PC-3 (cell line): ENCODE measurements at regions of chr12 and their contacts with region 1.

Region 1: DNA sequence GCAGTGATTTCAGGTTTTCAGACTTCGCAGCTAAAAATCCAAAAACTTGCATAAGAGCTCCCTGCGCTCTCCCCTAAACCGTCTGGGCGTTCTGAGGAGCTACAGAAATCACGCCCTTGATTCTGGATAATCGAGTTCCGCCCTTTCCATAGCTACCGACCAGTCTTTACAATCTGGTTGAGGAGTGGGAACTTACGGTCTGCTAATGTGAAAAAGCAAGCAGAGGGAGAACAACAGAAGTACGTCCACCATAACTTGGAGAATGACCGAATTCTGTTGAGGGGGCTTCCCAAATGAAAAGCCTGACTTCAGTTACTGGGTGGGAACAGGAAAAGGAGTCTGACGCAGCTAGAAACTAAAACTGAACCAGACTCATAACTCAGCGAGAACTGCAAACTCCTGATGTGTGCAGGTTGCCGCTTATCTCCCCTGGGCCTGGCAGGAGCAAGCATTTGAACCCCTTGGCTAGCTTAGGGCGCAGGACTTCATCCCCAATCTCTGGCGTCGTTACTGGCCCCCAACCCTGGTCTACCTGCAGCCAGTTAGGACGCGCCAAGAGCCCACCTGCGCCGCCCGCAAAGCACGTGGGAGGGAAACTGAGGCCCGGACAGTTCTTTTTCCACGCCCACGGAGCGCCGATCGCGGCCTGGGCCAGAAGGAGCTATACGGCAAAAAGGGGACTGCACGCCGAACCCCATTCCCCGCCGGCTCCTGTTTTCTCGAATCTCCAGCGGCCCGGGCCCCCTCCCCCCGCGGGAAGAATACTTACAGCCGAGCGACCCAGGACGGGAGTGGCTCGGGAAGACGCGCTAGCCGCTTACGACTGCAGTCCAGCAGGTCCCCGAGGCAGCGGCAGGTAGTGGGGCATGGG is 838 bp downstream of the LRIG3 start:
- DNase-seq: peak; percentile 48
- ATAC-seq: peak; percentile 37
- H3K4me3 ChIP-seq: peak overlapping the region; percentile 97
- H3K27ac ChIP-seq: peak overlapping the region; percentile 69
- H3K4me1 ChIP-seq: peaks cover 44% of the 10 kb centered on the region
- H3K27me3 ChIP-seq: no peaks in the 10 kb centered on the region
- CTCF ChIP-seq: no peak

Region 2: DNA sequence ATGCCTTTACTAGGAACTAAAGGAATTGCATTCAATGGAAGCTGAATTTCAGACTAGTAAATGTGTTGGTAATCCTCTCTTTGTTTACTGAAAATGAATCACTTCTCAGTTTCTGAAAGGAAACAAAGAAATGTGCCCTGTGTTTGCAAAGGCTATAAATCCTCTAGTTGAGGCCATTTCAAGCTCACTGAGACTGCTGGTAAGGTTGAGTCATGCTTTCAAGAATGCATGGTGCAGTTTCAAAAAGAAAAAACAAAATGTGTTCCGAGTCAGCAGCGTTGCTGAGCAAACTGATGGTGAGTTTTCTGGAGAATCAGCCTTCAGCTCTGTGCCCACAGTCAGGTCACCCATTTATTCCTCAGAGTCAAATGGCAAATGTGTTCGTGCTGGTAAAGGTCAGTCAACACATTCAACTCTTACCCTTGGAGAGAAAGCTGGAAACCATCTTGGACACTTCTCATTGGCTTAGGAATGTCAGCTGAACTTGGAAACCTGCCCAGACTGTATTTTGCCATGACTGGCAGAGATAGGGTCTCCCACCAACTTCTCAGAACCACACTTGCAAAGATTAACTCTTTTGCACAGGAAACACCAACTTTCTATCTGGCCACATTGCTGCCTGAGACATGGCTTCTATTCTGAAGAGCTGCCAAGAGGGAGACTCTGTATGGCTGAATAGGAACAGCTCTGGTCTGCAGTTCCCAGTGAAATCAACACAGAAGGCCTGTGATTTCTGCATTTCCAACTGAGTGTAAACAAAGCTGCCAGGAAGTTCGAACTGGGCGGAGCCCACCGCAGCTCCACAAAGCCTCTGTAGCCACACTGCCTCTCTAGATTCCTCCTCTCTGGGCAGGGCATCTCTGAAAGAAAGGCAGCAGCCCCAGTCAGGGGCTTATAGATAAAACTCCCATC is 493.7 kb before region 1 on chr12:
- CTCF ChIA-PET with region 1: no interaction called
- POLR2A ChIA-PET with region 1: no interaction called
- intact Hi-C with region 1: loop called (anchors 5 kb)
- DNase-seq: peak; percentile 95
- ATAC-seq: peak; percentile 87
- H3K4me3 ChIP-seq: peak overlapping the region; percentile 51
- H3K27ac ChIP-seq: peak overlapping the region; percentile 99
- H3K4me1 ChIP-seq: peaks cover 42% of the 10 kb centered on the region
- H3K27me3 ChIP-seq: no peaks in the 10 kb centered on the region
- CTCF ChIP-seq: no peak

Region 3: GRCh38 chr12:58540480-58541299 is 378.8 kb before region 1 on chr12:
- CTCF ChIA-PET with region 1: no interaction called
- POLR2A ChIA-PET with region 1: no interaction called
- intact Hi-C with region 1: loop called (anchors 10 kb)
- DNase-seq: peak; percentile 92
- ATAC-seq: peak; percentile 98
- H3K4me3 ChIP-seq: no peak overlapping the region
- H3K27ac ChIP-seq: peak overlapping the region; percentile 3; the same call in 1 of the 2 replicates
- H3K4me1 ChIP-seq: peaks cover 33% of the 10 kb centered on the region
- H3K27me3 ChIP-seq: no peaks in the 10 kb centered on the region
- CTCF ChIP-seq: peak; percentile 94

Region 4: DNA sequence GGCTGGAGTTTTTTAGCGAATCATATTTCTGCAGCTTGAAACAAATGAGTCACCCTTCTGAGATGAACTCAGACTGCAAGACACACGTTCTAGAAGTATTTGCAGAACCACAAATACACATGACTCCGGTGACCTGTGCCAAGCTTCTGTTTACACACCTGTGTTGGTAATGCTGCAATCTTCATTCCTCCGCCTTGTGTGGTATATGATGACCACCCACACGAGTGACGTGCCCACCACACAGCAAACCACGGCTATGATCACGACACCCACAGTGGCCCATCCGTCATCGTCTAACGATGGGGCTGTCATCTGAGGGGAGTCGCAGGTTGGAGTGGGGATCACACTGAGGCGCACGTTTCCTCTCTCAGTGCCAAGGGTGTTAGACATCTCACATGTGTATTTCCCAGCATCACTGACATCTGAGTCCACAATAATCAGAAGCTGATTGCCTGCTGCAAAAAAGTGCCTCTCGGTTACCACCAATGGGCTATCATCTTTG is 42.2 kb before region 1 on chr12:
- CTCF ChIA-PET with region 1: no interaction called
- POLR2A ChIA-PET with region 1: interaction called, 4 read pairs
- intact Hi-C with region 1: loop called (anchors 2 kb)
- DNase-seq: peak; percentile 99
- ATAC-seq: peak; percentile 99
- H3K4me3 ChIP-seq: no peak overlapping the region
- H3K27ac ChIP-seq: peak overlapping the region; percentile 32
- H3K4me1 ChIP-seq: peaks cover 17% of the 10 kb centered on the region
- H3K27me3 ChIP-seq: no peaks in the 10 kb centered on the region
- CTCF ChIP-seq: no peak

Region 5: DNA sequence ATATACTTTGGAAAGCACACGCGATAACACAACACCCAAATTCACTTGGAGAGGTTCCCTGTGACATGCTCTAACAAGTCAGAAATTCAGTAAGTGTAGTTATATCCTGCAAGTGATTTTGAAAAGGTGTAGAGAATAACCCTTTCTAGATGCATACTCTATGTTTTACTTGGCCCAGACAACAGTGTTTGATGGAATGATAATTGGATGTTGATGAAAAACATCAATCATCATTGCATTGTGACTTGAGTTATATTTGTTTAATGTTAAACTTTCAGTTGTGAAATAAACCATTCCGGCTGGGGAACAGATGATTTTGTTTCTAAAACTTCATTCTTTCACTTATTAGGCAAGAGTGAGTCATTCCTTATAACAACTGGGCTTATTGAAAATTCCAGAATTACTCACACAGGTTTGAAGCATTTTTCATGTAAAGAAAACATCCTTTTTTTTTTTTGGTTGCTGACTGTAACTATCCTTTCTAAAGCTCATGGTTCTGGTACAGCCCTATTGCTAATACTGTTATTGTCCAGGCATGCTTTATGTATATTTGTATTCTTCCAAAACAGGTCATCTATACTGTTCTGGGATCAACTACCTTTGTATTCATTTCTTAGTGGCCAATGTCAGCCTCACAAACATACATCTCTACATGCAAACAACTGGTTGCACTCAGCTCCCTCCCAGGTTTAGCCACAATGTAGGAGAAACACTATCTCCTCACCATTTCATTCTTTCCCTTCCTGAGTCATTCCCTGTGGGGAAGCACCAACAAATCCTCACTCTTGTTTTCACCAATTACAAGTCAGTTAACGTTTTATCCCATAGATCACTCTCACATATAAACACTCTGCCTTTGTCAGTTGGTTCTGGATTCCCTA is 122.0 kb after region 1 on chr12:
- CTCF ChIA-PET with region 1: no interaction called
- POLR2A ChIA-PET with region 1: no interaction called
- intact Hi-C with region 1: loop called (anchors 2 kb)
- DNase-seq: peak; percentile 94
- ATAC-seq: peak; percentile 91
- H3K4me3 ChIP-seq: peak overlapping the region; percentile 25; the same call in 1 of the 2 replicates
- H3K27ac ChIP-seq: peak overlapping the region; percentile 76
- H3K4me1 ChIP-seq: peaks cover 34% of the 10 kb centered on the region
- H3K27me3 ChIP-seq: no peaks in the 10 kb centered on the region
- CTCF ChIP-seq: no peak

Region 6: GRCh38 chr12:59055204-59055839 is 135.9 kb after region 1 on chr12:
- CTCF ChIA-PET with region 1: no interaction called
- POLR2A ChIA-PET with region 1: interaction called, 3 read pairs
- intact Hi-C with region 1: loop called (anchors 5 kb)
- DNase-seq: peak; percentile 94
- ATAC-seq: peak; percentile 99
- H3K4me3 ChIP-seq: no peak overlapping the region
- H3K27ac ChIP-seq: peak overlapping the region; percentile 69
- H3K4me1 ChIP-seq: peaks cover 15% of the 10 kb centered on the region
- H3K27me3 ChIP-seq: no peaks in the 10 kb centered on the region
- CTCF ChIP-seq: no peak